ENCODE measurements at regions of chr6 and their contacts with region 1.

Region 1: DNA sequence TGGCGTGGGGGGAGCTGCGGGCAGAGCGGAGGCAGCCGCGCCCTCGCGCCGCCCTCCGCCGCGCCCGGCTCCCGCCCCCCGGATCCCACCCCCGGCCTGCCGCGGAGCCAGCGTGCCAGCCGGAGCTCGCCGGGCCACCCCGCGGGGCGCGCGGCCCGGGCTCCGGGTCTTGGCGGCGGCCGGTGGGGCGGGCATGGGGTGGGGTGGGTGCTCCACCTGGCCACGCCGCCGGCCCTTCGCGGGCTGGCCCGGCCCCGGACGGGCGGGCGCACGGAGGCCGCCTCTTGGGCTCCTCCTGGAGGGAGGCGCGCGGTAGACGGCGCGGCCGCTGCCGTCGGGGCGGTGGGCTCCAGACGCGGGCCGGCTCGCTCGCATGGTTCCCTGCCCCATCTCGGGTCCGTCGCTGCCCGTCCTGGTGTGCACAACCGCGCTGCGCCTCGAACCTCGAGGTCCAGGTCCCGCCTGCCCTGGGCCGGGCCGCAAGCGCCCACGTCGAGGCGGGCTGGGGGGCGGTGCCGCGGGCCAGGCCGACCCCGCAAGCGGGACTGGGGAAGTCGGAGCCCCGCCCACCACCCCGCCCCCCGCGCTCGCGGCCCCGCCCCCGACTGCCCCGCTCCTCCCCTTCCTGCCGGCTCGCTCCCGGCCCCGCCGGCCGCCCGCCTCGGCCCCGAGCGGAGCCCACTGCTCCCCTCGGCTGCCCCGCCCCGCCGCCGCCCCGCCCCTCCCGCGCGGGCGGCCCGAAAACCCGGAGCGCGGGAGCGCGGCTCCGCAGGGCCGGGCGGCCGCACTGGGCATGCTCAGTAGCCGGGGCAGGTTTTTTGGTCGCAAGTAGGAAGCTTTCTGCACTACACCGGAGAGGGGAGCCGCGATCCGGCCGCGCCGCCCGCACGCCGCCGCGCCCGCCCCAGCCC is at the start of gene CDYL:
- DNase-seq: peak; percentile 75 to 94 (median 88)
- ATAC-seq: peak; percentile 89
- H3K4me3 ChIP-seq: peak within 1 kb of the TSS; percentile 58
- H3K4me3 Mint-ChIP-seq: peak within 1 kb of the TSS; percentile 84 to 96 (median 93)
- H3K27ac ChIP-seq: peak within 1 kb of the TSS; percentile 63
- H3K27ac Mint-ChIP-seq: peak within 1 kb of the TSS; percentile 61 to 94 (median 87)
- H3K4me1 ChIP-seq: peaks cover 0 to 10% of the 10 kb centered on the region in 2 donors
- H3K4me1 Mint-ChIP-seq: peaks cover 32 to 48% (median 46%) of the 10 kb centered on the region in 7 donors
- H3K27me3 ChIP-seq: no peaks in the 10 kb centered on the region
- H3K27me3 Mint-ChIP-seq: peaks cover 0 to 38% (median 0%) of the 10 kb centered on the region in 5 donors
- total RNA-seq, gene CDYL: 25.5 to 43.3 (median 35.1) TPM

Region 2: GRCh38 chr6:3162565-3163247 is 1613.1 kb before region 1 on chr6:
- CTCF ChIA-PET with region 1: no interaction called
- POLR2A ChIA-PET with region 1: no interaction called
- intact Hi-C with region 1: loop called in 1 of 2 experiments (anchors 5 kb)
- DNase-seq: peak; percentile 29 to 62 (median 51)
- ATAC-seq: peak; percentile 63
- H3K4me3 ChIP-seq: peak overlapping the region; percentile 73
- H3K4me3 Mint-ChIP-seq: peak overlapping the region; percentile 78 to 87 (median 84)
- H3K27ac ChIP-seq: peak overlapping the region; percentile 70
- H3K27ac Mint-ChIP-seq: peak overlapping the region in 8 of 9 donors; percentile 37 to 92 (median 64)
- H3K4me1 ChIP-seq: peaks cover 19 to 22% of the 10 kb centered on the region in 2 donors
- H3K4me1 Mint-ChIP-seq: peaks cover 0 to 40% (median 36%) of the 10 kb centered on the region in 7 donors
- H3K27me3 ChIP-seq: no peaks in the 10 kb centered on the region
- H3K27me3 Mint-ChIP-seq: peaks cover 0 to 68% (median 6%) of the 10 kb centered on the region in 5 donors

Region 3: GRCh38 chr6:4747588-4747987 is 28.3 kb before region 1 on chr6:
- CTCF ChIA-PET with region 1: no interaction called
- POLR2A ChIA-PET with region 1: no interaction called
- intact Hi-C with region 1: no loop called
- DNase-seq: no peak
- ATAC-seq: no peak
- H3K4me3 ChIP-seq: no peak overlapping the region
- H3K4me3 Mint-ChIP-seq: no peak overlapping the region
- H3K27ac ChIP-seq: no peak overlapping the region
- H3K27ac Mint-ChIP-seq: no peak overlapping the region
- H3K4me1 ChIP-seq: no peaks in the 10 kb centered on the region
- H3K4me1 Mint-ChIP-seq: no peaks in the 10 kb centered on the region
- H3K27me3 ChIP-seq: no peaks in the 10 kb centered on the region
- H3K27me3 Mint-ChIP-seq: peaks cover 0 to 5% (median 4%) of the 10 kb centered on the region in 5 donors

Region 4: DNA sequence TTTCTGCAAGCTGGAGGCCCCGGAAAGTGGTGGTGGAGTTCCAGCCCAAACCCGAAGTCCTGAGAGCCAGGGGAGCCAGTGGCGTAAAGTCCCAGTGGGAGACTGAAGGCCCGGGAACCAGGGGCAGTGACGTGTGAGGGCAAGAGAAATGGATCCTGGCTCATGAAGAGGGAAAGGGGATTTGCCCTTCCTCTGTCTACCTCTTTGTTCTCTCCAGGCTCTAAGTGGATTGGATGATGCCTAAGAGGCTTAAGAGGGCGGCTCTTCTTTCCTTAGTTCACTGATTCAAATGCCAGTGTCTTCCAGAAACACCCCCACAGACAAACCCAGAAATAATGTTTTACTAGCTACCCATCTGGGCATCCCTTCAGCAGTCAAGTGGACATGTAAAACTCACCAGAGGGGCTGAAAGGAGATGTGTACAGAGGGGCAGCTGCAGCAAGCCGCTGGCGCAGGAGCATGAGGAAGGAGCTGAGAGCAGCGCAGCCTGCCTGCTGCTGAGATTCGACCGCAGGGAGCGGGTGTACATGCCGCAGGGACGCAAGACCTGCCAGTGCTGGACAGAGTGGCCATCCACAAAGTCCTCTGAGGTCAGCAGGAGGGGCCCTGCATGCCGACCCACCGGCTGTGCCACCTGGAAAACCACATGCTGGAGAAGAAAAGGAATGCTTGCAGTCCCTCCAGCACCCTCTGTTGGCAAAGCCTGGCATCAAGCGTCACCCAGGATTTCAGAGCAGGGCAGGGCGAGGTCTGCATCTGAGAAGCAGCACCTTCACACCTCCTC is 29.9 kb after region 1 on chr6:
- CTCF ChIA-PET with region 1: interaction called, 3 read pairs
- POLR2A ChIA-PET with region 1: no interaction called
- intact Hi-C with region 1: loop called in 1 of 2 experiments (anchors 2 kb)
- DNase-seq: peak in 4 of 9 donors; percentile 15 to 22 (median 20)
- ATAC-seq: peak; percentile 30
- H3K4me3 ChIP-seq: no peak overlapping the region
- H3K4me3 Mint-ChIP-seq: peak overlapping the region in 3 of 10 donors; percentile 18 to 65 (median 22)
- H3K27ac ChIP-seq: no peak overlapping the region
- H3K27ac Mint-ChIP-seq: peak overlapping the region in 2 of 9 donors; percentile 39 to 54
- H3K4me1 ChIP-seq: peaks cover 0 to 3% of the 10 kb centered on the region in 2 donors
- H3K4me1 Mint-ChIP-seq: peaks cover 24 to 91% (median 77%) of the 10 kb centered on the region in 7 donors
- H3K27me3 ChIP-seq: no peaks in the 10 kb centered on the region
- H3K27me3 Mint-ChIP-seq: no peaks in the 10 kb centered on the region

Region 5: DNA sequence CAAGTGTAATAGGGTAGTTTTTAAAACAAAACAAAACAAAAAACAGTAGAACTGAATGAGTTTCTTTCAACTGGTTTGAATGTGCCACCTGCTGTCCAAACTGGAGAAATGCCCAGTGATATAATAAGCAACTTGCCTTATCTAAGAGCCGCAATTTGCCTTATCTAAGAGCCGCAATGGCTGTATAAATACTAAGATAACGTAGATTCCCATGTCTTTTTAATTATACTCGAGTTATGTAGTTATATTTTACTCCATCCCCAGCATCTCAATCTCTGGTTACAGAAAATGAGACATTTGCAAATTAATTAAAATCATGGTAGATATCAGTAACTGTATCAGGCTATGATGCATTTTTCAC is 160.8 kb after region 1 on chr6:
- CTCF ChIA-PET with region 1: no interaction called
- POLR2A ChIA-PET with region 1: no interaction called
- intact Hi-C with region 1: loop called in 1 of 2 experiments (anchors 5 kb)
- DNase-seq: peak in 5 of 9 donors; percentile 5 to 31 (median 25)
- ATAC-seq: peak; percentile 44
- H3K4me3 ChIP-seq: no peak overlapping the region
- H3K4me3 Mint-ChIP-seq: no peak overlapping the region
- H3K27ac ChIP-seq: no peak overlapping the region
- H3K27ac Mint-ChIP-seq: peak overlapping the region in 1 of 9 donors; percentile 17
- H3K4me1 ChIP-seq: peaks cover 0 to 3% of the 10 kb centered on the region in 2 donors
- H3K4me1 Mint-ChIP-seq: peaks cover 10 to 41% (median 22%) of the 10 kb centered on the region in 7 donors
- H3K27me3 ChIP-seq: no peaks in the 10 kb centered on the region
- H3K27me3 Mint-ChIP-seq: no peaks in the 10 kb centered on the region

Region 6: GRCh38 chr6:5003604-5004372 is 227.9 kb after region 1 on chr6 and contains the start of gene RPP40:
- CTCF ChIA-PET with region 1: no interaction called
- POLR2A ChIA-PET with region 1: interaction called, 4 read pairs
- intact Hi-C with region 1: loop called (anchors 1 kb)
- DNase-seq: peak; percentile 97 to 99 (median 99)
- ATAC-seq: peak; percentile 97
- H3K4me3 ChIP-seq: peak within 1 kb of the TSS; percentile 91
- H3K4me3 Mint-ChIP-seq: peak within 1 kb of the TSS; percentile 88 to 95 (median 94)
- H3K27ac ChIP-seq: peak within 1 kb of the TSS; percentile 82
- H3K27ac Mint-ChIP-seq: peak within 1 kb of the TSS; percentile 91 to 98 (median 94)
- H3K4me1 ChIP-seq: peaks cover 9% of the 10 kb centered on the region in 2 donors
- H3K4me1 Mint-ChIP-seq: peaks cover 0 to 20% (median 13%) of the 10 kb centered on the region in 7 donors
- H3K27me3 ChIP-seq: no peaks in the 10 kb centered on the region
- H3K27me3 Mint-ChIP-seq: no peaks in the 10 kb centered on the region
- total RNA-seq, gene RPP40: 3.8 to 8.0 (median 5.1) TPM

Region 7: DNA sequence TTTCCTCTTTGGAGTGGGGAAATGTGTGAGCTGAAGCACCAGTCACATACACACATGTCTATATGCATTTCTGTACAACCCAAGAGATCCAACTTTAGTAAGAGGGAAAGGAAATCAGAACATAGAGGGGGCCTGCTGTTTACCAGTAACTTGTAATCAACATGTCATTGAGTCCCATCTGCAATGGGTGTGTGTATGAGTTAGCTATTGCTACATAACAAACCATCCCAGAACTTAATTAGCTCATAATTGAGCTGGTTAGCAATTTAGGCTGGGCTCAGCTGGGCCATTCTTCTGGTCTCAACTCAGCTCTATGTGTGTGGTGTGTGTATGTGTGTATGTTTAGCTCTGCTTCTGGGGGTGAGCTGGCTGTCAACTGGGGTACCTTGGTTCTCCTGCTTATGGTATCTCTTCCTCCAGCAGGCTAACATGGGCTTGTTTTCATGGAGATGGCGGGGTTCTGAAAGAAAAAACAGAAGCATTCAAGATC is 238.3 kb after region 1 on chr6:
- CTCF ChIA-PET with region 1: no interaction called
- POLR2A ChIA-PET with region 1: no interaction called
- intact Hi-C with region 1: no loop called
- DNase-seq: no peak
- ATAC-seq: no peak
- H3K4me3 ChIP-seq: no peak overlapping the region
- H3K4me3 Mint-ChIP-seq: no peak overlapping the region
- H3K27ac ChIP-seq: no peak overlapping the region
- H3K27ac Mint-ChIP-seq: no peak overlapping the region
- H3K4me1 ChIP-seq: no peaks in the 10 kb centered on the region
- H3K4me1 Mint-ChIP-seq: peaks cover 0 to 3% (median 0%) of the 10 kb centered on the region in 7 donors
- H3K27me3 ChIP-seq: no peaks in the 10 kb centered on the region
- H3K27me3 Mint-ChIP-seq: peaks cover 0 to 30% (median 0%) of the 10 kb centered on the region in 5 donors

Measured in naive thymus-derived CD4-positive, alpha-beta T cell (primary cell).